ENCODE measurements at regions of chr2 and their contacts with region 1.

Region 1: GRCh38 chr2:127857265-127857808 is 618 bp downstream of the POLR2D start:
- DNase-seq: no peak
- H3K4me3 Mint-ChIP-seq: peak overlapping the region; percentile 92
- H3K27ac Mint-ChIP-seq: peak overlapping the region; percentile 78
- H3K4me1 Mint-ChIP-seq: peaks cover 32% of the 10 kb centered on the region
- H3K27me3 Mint-ChIP-seq: no peaks in the 10 kb centered on the region

Region 2: DNA sequence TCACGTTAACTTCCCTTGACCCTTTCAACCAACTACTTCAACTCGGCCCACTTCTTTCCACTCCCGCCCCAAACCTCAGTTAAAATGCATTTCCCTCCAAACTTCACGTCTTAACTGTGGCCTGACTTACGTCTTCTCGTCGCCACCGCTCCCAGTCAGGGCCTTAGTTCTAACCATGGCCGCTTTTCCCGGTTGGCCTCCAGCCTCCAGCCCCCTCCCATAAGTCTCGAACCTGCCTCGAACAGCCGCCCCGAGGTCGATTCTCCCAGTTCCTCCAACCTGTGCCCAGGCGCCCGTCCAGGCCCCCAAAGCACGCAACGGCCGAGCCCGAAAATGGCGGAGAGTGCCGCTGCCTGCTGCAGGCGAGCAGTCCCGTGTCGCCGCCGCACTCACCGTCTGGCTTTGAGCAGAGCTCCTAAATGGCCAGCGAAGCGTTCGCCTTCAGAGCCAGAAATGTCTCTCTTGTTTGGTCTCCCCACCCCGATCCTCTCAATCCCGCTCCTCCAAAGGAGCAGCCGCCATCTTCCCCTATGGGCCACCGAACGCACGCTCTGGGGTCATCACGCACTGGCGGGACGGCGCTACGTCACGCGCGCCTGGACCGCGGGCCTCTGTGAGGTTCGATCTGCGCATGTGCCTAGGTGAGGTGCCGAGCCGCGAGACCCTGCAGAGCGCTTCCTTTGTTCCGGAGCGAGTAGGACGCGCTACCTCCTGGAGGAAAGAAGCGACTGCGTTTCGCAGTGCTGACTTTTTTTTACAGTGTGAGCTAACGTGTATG is 46.5 kb before region 1 on chr2 and contains the start of gene WDR33:
- intact Hi-C with region 1: loop called (anchors 1 kb)
- DNase-seq: peak; percentile 94
- H3K4me3 Mint-ChIP-seq: peak within 1 kb of the TSS; percentile 95
- H3K27ac Mint-ChIP-seq: peak within 1 kb of the TSS; percentile 94
- H3K4me1 Mint-ChIP-seq: peaks cover 42% of the 10 kb centered on the region
- H3K27me3 Mint-ChIP-seq: peaks cover 6% of the 10 kb centered on the region
- total RNA-seq, gene WDR33: 81.0 and 82.4 TPM in 2 replicates

Region 3: DNA sequence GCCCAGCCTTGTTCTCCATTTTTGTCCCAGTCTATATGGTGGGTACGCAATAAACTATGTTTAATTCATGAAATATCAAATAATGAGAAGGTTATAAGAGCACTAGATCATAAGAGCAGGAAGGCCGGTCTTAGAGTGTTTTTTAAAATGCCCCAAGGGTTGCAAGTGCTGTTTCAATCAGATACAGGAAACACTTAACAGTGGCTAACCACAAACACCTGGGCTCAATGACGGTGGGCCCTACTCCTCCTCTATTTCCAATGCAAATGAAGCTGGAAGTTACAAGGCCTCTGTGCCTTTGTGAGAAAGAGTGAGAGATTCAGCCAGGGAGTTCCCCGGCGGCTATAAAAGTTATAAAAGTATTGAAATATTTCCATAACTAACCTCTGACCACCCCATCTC is 27.5 kb before region 1 on chr2:
- intact Hi-C with region 1: loop called (anchors 1 kb)
- DNase-seq: peak; percentile 62
- H3K4me3 Mint-ChIP-seq: peak overlapping the region; percentile 20
- H3K27ac Mint-ChIP-seq: peak overlapping the region; percentile 85
- H3K4me1 Mint-ChIP-seq: peaks cover 45% of the 10 kb centered on the region
- H3K27me3 Mint-ChIP-seq: peaks cover 4% of the 10 kb centered on the region

Region 4: DNA sequence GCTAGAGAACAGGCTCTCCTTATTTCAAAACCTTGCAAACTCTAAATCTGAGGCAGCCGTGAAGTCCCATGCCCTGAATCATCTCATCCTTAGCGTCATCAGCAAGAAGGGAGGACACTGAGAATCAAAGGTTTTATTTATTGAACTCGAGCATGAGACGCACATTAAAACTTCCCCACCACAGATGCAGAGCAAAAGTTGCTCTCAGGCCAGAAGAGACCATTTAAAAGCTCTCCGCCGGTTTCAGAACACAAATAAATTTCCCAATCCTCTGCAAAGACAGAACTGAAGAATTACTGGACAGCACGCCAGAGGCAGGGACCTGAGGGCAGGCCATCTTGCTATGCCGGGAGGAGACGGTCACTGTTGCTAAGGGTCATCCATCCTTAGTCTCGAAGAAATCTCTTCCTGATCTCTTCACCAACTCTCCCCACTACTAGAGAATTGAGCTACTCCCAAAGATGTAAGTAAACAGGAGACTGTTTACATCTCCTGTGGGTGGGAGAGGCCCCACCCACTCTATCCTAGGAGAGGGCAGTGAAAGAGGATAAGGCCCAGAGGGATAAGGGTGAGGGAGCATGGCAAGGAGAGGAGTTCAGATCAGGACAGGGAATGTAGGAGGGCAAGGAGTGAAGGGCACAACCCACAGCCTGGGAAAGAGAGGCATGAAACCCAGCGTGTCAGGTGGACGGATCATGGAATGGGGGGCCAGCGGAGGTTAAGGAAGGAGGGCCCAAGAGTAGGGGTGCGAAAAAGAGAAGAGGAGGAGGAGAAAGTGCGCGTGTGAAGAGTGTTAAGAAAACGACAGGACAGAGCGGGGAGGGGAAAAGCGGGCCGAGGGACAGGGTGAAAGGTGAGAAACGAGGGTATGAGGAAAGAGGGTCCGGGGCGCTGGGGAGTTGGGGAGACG is 27.4 kb after region 1 on chr2:
- intact Hi-C with region 1: loop called (anchors 1 kb)
- DNase-seq: no peak
- H3K4me3 Mint-ChIP-seq: peak overlapping the region; percentile 98
- H3K27ac Mint-ChIP-seq: peak overlapping the region; percentile 95
- H3K4me1 Mint-ChIP-seq: peaks cover 45% of the 10 kb centered on the region
- H3K27me3 Mint-ChIP-seq: no peaks in the 10 kb centered on the region